Caco-2 (cell line): ENCODE measurements at regions of chr7 and their contacts with region 1.

Region 1: DNA sequence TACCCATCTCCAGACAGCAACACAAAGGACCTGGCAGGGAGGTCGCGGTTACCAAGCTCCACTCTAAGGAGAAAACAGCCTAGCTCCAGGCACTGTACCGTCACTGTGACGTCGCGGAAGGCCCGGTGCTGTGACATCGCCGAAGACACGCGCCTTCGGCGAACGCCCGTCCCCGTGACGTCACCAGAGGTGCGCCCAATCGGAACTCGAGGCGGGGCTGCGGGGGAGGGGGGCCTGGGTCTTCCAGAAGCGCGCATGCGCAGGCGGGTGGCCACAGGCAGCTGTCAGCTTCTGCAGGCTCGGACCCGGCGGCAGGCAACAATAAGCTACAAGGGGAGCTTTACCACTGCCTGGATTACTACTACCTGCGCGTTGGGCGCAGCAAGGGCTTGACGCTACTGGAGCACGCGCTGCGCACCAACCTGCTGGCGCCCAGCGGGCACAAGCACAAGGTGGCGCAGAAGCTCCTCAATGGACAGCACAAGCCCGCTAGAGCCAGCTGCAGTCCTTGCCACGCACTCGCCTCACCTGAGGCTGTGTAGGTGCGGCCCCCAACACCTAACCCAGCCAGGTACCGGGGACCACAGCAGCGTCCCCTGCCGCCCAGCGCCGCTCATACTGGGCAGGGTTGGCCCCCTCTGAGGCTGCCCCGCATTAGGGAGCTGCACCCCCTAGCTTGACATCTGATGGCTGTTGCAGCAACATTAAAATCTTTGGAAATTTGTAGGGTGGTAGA is 208.4 kb downstream of the TPST1 start:
- DNase-seq: peak; percentile 99
- H3K4me3 ChIP-seq: peak overlapping the region; percentile 60
- H3K4me3 Mint-ChIP-seq: peak overlapping the region; percentile 84
- H3K27ac Mint-ChIP-seq: peak overlapping the region; percentile 97
- H3K4me1 ChIP-seq: no peaks in the 10 kb centered on the region; the same call in 1 of the 2 replicates
- H3K4me1 Mint-ChIP-seq: no peaks in the 10 kb centered on the region
- H3K27me3 ChIP-seq: no peaks in the 10 kb centered on the region
- H3K27me3 Mint-ChIP-seq: no peaks in the 10 kb centered on the region
- CTCF ChIP-seq: peak; percentile 44 to 73

Region 2: GRCh38 chr7:66033471-66034385 is 379.8 kb before region 1 on chr7:
- CTCF ChIA-PET with region 1: interaction called, 12 read pairs
- POLR2A ChIA-PET with region 1: no interaction called
- intact Hi-C with region 1: loop called (anchors 1 kb)
- DNase-seq: no peak
- H3K4me3 ChIP-seq: no peak overlapping the region
- H3K4me3 Mint-ChIP-seq: no peak overlapping the region
- H3K27ac Mint-ChIP-seq: no peak overlapping the region
- H3K4me1 ChIP-seq: no peaks in the 10 kb centered on the region
- H3K4me1 Mint-ChIP-seq: no peaks in the 10 kb centered on the region
- H3K27me3 ChIP-seq: no peaks in the 10 kb centered on the region
- H3K27me3 Mint-ChIP-seq: no peaks in the 10 kb centered on the region
- CTCF ChIP-seq: no peak

Region 3: GRCh38 chr7:66114793-66115649 is 298.5 kb before region 1 on chr7 and contains the start of gene CRCP:
- CTCF ChIA-PET with region 1: interaction called, 7 read pairs
- POLR2A ChIA-PET with region 1: interaction called, 13 read pairs
- intact Hi-C with region 1: no loop called
- DNase-seq: peak; percentile 89 to 92
- H3K4me3 ChIP-seq: peak within 1 kb of the TSS; percentile 86
- H3K4me3 Mint-ChIP-seq: peak within 1 kb of the TSS; percentile 90
- H3K27ac Mint-ChIP-seq: peak within 1 kb of the TSS; percentile 99
- H3K4me1 ChIP-seq: peaks cover 10% of the 10 kb centered on the region
- H3K4me1 Mint-ChIP-seq: peaks cover 11% of the 10 kb centered on the region
- H3K27me3 ChIP-seq: no peaks in the 10 kb centered on the region
- H3K27me3 Mint-ChIP-seq: no peaks in the 10 kb centered on the region
- CTCF ChIP-seq: peak in 1 of 2 experiments; percentile 70
- total RNA-seq, gene CRCP: 48.2 and 48.7 TPM in 2 replicates

Region 4: GRCh38 chr7:66150471-66150870 is 263.1 kb before region 1 on chr7:
- CTCF ChIA-PET with region 1: no interaction called
- POLR2A ChIA-PET with region 1: no interaction called
- intact Hi-C with region 1: no loop called
- DNase-seq: no peak
- H3K4me3 ChIP-seq: no peak overlapping the region
- H3K4me3 Mint-ChIP-seq: no peak overlapping the region
- H3K27ac Mint-ChIP-seq: no peak overlapping the region
- H3K4me1 ChIP-seq: peaks cover 5% of the 10 kb centered on the region; the same call in 1 of the 2 replicates
- H3K4me1 Mint-ChIP-seq: no peaks in the 10 kb centered on the region
- H3K27me3 ChIP-seq: no peaks in the 10 kb centered on the region
- H3K27me3 Mint-ChIP-seq: no peaks in the 10 kb centered on the region
- CTCF ChIP-seq: no peak

Region 5: DNA sequence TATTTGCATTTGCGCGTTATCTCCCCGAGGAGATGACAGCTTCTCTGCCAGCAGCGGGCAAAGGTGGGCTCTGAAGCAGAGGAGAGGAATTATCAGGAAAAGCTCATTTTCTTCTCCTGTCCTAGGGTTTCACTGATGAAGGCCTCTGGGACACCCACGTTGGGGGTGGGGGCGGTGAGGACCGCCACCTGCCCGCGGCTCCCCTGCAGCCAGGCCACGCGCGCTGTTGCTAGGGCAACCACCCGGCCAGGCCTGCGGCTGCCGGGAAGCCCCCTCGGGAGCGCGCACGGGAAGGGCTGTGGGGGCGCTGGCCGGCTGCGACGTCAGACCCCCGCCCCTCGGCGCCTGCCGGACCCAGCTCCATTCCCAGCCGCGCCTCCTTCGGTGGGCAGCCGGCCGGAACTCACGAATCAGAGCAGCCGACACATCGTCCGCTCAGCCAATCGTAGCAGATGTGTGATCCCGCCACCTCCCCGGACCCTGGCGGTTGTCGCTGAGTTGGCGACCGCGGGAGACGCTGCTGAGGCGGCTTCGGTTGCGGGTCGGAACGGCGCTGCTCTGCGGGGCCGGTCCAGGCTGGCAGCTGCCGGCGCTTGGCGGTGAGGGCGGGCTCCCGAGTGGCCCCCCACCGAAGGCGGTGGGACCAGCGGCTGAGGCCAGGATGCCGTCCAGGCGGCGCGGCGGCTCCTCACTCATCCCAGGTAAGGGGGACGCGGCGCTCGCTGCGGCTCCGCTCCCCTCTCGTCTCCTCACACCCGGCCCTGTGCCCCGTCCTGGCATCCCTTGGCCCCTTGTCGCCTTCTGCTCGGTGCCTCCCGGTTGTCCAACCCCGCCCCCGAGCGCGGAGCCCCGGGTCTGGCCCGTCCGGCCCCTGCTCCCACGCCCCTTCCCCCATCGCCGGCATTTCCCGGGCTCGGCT is 208.5 kb before region 1 on chr7 and contains the start of gene TPST1:
- CTCF ChIA-PET with region 1: interaction called, 12 read pairs
- POLR2A ChIA-PET with region 1: interaction called, 14 read pairs
- intact Hi-C with region 1: loop called (anchors 1 kb)
- DNase-seq: peak; percentile 92 to 97
- H3K4me3 ChIP-seq: peak within 1 kb of the TSS; percentile 89
- H3K4me3 Mint-ChIP-seq: peak within 1 kb of the TSS; percentile 80
- H3K27ac Mint-ChIP-seq: peak within 1 kb of the TSS; percentile 75
- H3K4me1 ChIP-seq: peaks cover 5% of the 10 kb centered on the region
- H3K4me1 Mint-ChIP-seq: peaks cover 12% of the 10 kb centered on the region
- H3K27me3 ChIP-seq: no peaks in the 10 kb centered on the region
- H3K27me3 Mint-ChIP-seq: no peaks in the 10 kb centered on the region
- CTCF ChIP-seq: peak; percentile 48 to 80
- total RNA-seq, gene TPST1: 31.0 and 32.8 TPM in 2 replicates

Region 6: GRCh38 chr7:66237906-66238772 is 175.4 kb before region 1 on chr7:
- CTCF ChIA-PET with region 1: interaction called, 4 read pairs
- POLR2A ChIA-PET with region 1: interaction called, 13 read pairs
- intact Hi-C with region 1: loop called (anchors 2 kb)
- DNase-seq: peak; percentile 78 to 87
- H3K4me3 ChIP-seq: no peak overlapping the region
- H3K4me3 Mint-ChIP-seq: peak overlapping the region; percentile 56
- H3K27ac Mint-ChIP-seq: peak overlapping the region; percentile 71
- H3K4me1 ChIP-seq: peaks cover 49% of the 10 kb centered on the region
- H3K4me1 Mint-ChIP-seq: peaks cover 45% of the 10 kb centered on the region
- H3K27me3 ChIP-seq: no peaks in the 10 kb centered on the region
- H3K27me3 Mint-ChIP-seq: no peaks in the 10 kb centered on the region
- CTCF ChIP-seq: no peak

Region 7: GRCh38 chr7:66307591-66308215 is 105.8 kb before region 1 on chr7:
- CTCF ChIA-PET with region 1: no interaction called
- POLR2A ChIA-PET with region 1: no interaction called
- intact Hi-C with region 1: no loop called
- DNase-seq: no peak
- H3K4me3 ChIP-seq: no peak overlapping the region
- H3K4me3 Mint-ChIP-seq: no peak overlapping the region
- H3K27ac Mint-ChIP-seq: no peak overlapping the region
- H3K4me1 ChIP-seq: peaks cover 40% of the 10 kb centered on the region
- H3K4me1 Mint-ChIP-seq: peaks cover 48% of the 10 kb centered on the region
- H3K27me3 ChIP-seq: no peaks in the 10 kb centered on the region
- H3K27me3 Mint-ChIP-seq: no peaks in the 10 kb centered on the region
- CTCF ChIP-seq: no peak

Region 8: DNA sequence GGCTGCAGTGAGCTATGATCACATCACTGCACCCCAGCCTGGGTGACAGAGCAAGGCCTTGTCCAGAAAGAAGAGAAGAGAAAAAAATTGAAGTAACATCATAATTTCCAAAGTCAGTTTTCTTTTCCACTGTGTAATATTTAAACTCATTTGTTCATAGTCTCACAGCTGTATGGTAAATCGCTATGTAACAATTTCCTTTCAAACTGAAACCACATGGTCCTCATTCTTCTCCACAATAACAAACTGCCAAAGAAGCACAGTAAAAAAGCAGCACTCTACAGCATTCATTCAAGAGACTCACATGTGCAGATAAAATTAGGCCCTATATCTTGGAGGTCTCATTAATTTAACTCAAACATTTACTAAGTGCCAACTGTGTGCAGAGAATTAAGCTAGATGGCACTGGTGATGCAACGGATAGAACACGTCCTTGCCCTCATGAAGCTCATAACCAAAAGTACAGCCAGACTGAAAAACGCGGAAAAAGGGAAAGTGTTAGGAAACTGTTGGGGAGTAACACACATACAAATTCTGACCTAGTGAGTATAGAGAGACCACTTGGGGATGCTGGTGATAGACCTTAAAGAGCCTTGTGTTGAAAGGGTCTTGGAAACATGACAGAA is 41.2 kb after region 1 on chr7:
- CTCF ChIA-PET with region 1: no interaction called
- POLR2A ChIA-PET with region 1: interaction called, 11 read pairs
- intact Hi-C with region 1: no loop called
- DNase-seq: no peak
- H3K4me3 ChIP-seq: no peak overlapping the region
- H3K4me3 Mint-ChIP-seq: no peak overlapping the region
- H3K27ac Mint-ChIP-seq: no peak overlapping the region
- H3K4me1 ChIP-seq: no peaks in the 10 kb centered on the region
- H3K4me1 Mint-ChIP-seq: no peaks in the 10 kb centered on the region
- H3K27me3 ChIP-seq: no peaks in the 10 kb centered on the region
- H3K27me3 Mint-ChIP-seq: no peaks in the 10 kb centered on the region
- CTCF ChIP-seq: no peak

Region 9: DNA sequence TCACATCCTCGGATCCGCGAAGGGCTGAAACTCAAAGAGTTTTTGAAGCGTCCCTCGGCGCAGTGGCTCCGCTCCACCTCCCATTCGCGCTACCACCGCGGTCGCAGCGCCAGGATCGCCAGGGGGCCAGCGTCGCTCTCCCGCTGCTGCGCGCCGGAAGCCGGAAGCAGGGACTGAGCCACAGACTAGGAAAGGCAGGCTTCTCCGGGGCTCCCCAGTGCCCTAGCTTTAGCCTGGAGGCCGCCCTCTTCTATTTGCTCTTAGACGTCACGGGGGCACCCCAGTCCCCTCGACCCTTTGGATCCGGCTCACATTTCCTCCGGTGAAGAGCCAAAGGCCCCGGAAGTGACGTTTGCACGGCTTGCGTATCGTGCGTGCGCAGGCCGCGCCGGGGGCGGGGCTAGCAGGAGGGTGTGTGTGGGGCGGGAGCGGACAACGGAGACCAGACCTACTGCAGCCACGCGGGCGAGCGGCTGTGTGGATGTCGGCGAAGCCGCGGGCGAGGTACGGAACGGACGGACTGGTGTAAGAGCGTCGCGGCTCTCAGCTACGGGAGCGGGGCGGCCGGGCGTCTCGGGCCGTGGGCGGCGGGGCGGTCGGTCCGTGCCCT is 240.7 kb after region 1 on chr7:
- CTCF ChIA-PET with region 1: no interaction called
- POLR2A ChIA-PET with region 1: interaction called, 13 read pairs
- intact Hi-C with region 1: loop called (anchors 10 kb)
- DNase-seq: peak; percentile 99 to 100
- H3K4me3 ChIP-seq: peak overlapping the region; percentile 96
- H3K4me3 Mint-ChIP-seq: peak overlapping the region; percentile 97
- H3K27ac Mint-ChIP-seq: peak overlapping the region; percentile 98
- H3K4me1 ChIP-seq: no peaks in the 10 kb centered on the region
- H3K4me1 Mint-ChIP-seq: peaks cover 15% of the 10 kb centered on the region
- H3K27me3 ChIP-seq: no peaks in the 10 kb centered on the region
- H3K27me3 Mint-ChIP-seq: no peaks in the 10 kb centered on the region
- CTCF ChIP-seq: peak in 1 of 2 experiments; percentile 31